Left lung (tissue), 14 donors: ENCODE measurements at regions of chr9 and their contacts with region 1.

Region 1: GRCh38 chr9:124126571-124127289 is 115.2 kb downstream of the LHX2 start:
- DNase-seq: peak; percentile 41 to 91 (median 69)
- ATAC-seq: peak; percentile 91
- H3K4me3 ChIP-seq: no peak overlapping the region
- H3K27ac ChIP-seq: no peak overlapping the region
- H3K4me1 ChIP-seq: peaks cover 0 to 3% of the 10 kb centered on the region in 2 donors
- H3K27me3 ChIP-seq: peaks cover 0 to 12% of the 10 kb centered on the region in 2 donors
- CTCF ChIP-seq: peak; percentile 98 to 100

Region 2: DNA sequence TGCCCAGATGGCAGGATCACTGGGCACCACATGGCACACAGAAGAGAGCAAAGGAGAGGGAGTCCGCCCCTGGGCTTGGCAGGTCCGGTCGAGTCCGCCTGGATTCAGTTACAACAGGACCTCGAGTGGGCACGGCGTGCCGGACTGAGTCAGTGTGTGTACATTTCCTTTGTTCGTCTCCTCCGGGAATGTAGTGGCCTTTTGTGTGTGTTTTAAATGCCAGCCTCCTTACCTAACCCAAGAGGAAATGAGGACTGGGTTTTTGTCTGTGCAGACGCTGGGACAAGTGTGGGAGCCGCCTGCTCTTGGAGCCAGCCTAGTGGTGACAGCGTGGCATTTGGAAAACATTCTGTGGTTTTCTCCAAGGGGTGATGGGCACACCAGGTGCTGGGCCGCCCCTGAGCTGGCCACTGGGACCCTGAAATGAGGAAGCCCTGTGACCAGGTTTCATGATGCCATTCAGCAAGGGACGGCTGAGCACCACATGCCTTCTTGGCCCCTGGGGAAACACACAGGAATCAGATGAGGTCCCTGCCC is 140.6 kb after region 1 on chr9:
- intact Hi-C with region 1: no loop called
- DNase-seq: peak in 3 of 4 donors; percentile 71 to 91 (median 88)
- ATAC-seq: peak; percentile 84
- H3K4me3 ChIP-seq: no peak overlapping the region
- H3K27ac ChIP-seq: peak overlapping the region; percentile 84 to 94
- H3K4me1 ChIP-seq: peaks cover 63 to 100% of the 10 kb centered on the region in 2 donors
- H3K27me3 ChIP-seq: no peaks in the 10 kb centered on the region
- CTCF ChIP-seq: no peak

Region 3: DNA sequence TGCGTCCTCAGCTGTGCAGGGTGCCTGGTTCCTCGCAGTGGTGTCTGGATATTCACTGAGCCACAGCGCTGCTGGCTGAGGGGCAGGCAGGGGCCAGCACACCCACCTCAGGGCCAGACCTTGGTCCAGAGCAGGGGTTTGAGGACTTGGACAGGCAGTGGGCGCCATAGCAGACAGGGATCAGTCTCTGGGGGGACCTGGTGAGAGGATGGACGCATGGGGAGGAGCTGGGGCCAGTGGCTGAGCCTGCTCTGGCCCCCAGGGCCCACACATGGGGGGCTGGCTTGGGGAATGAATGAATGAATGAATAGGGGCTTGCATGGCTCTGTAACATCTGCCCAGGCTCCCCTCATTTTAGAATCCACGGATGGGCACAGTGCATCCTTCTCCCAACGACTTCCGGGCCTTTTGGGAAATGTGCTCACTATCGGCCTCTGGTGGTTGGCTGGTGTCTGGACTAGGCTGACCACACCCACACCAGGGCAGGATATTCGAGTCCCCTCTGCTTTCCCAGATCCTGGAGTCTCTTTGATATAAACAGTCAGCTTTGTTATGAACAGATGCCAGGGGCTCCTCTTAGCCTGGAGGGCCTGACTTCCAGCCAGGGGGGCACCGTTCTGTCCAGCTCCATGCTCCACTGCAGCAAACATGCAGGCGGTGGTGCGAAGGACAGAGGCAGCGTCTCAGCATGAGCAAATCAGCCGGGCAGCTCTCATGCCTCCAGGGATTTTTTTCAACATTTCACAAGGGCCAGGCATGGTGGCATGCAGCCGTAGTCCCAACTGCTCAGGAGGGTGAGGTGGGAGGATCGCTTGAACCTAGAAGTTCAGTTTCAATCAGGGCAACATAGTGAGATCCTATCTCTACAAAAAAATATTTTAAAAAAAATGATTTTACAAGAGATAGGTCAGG is 193.6 kb after region 1 on chr9:
- intact Hi-C with region 1: loop called in 1 of 2 experiments (anchors 5 kb)
- DNase-seq: peak in 3 of 4 donors; percentile 42 to 72 (median 66)
- ATAC-seq: peak; percentile 88
- H3K4me3 ChIP-seq: no peak overlapping the region
- H3K27ac ChIP-seq: no peak overlapping the region
- H3K4me1 ChIP-seq: peaks cover 0 to 27% of the 10 kb centered on the region in 2 donors
- H3K27me3 ChIP-seq: no peaks in the 10 kb centered on the region
- CTCF ChIP-seq: peak; percentile 61 to 88

Region 4: GRCh38 chr9:124381170-124381945 is 254.6 kb after region 1 on chr9:
- intact Hi-C with region 1: loop called in 1 of 2 experiments (anchors 10 kb)
- DNase-seq: no peak
- ATAC-seq: peak; percentile 21
- H3K4me3 ChIP-seq: no peak overlapping the region
- H3K27ac ChIP-seq: peak overlapping the region in 1 of 2 donors; percentile 66
- H3K4me1 ChIP-seq: peaks cover 3 to 44% of the 10 kb centered on the region in 2 donors
- H3K27me3 ChIP-seq: no peaks in the 10 kb centered on the region
- CTCF ChIP-seq: no peak